ENCODE measurements at regions of chr3 and their contacts with region 1.

Region 1: GRCh38 chr3:14431892-14432834 is 29.8 kb downstream of the SLC6A6 start:
- DNase-seq: peak; percentile 73 to 96 (median 92)
- ATAC-seq: peak; percentile 89
- H3K4me3 Mint-ChIP-seq: peak overlapping the region; percentile 50 to 88 (median 84)
- H3K27ac Mint-ChIP-seq: peak overlapping the region; percentile 97 to 99 (median 99)
- H3K4me1 Mint-ChIP-seq: peaks cover 46 to 98% (median 83%) of the 10 kb centered on the region in 4 donors
- H3K27me3 Mint-ChIP-seq: no peaks in the 10 kb centered on the region

Region 2: GRCh38 chr3:14358426-14359211 is 73.5 kb before region 1 on chr3:
- POLR2A ChIA-PET with region 1: no interaction called
- DNase-seq: no peak
- ATAC-seq: no peak
- H3K4me3 Mint-ChIP-seq: no peak overlapping the region
- H3K27ac Mint-ChIP-seq: no peak overlapping the region
- H3K4me1 Mint-ChIP-seq: no peaks in the 10 kb centered on the region
- H3K27me3 Mint-ChIP-seq: peaks cover 0 to 2% (median 0%) of the 10 kb centered on the region in 5 donors

Region 3: GRCh38 chr3:14402304-14402811 is 29.8 kb before region 1 on chr3 and contains the start of gene SLC6A6:
- POLR2A ChIA-PET with region 1: interaction called, 108 read pairs
- DNase-seq: peak; percentile 84 to 97 (median 92)
- ATAC-seq: peak; percentile 80
- H3K4me3 Mint-ChIP-seq: peak within 1 kb of the TSS; percentile 85 to 99 (median 97)
- H3K27ac Mint-ChIP-seq: peak within 1 kb of the TSS; percentile 92 to 99 (median 98)
- H3K4me1 Mint-ChIP-seq: peaks cover 23 to 58% (median 49%) of the 10 kb centered on the region in 4 donors
- H3K27me3 Mint-ChIP-seq: no peaks in the 10 kb centered on the region
- polyA plus RNA-seq, gene SLC6A6: 2.1 to 5.0 (median 3.0) TPM